ENCODE measurements at regions of chr3 and their contacts with region 1.

Region 1: DNA sequence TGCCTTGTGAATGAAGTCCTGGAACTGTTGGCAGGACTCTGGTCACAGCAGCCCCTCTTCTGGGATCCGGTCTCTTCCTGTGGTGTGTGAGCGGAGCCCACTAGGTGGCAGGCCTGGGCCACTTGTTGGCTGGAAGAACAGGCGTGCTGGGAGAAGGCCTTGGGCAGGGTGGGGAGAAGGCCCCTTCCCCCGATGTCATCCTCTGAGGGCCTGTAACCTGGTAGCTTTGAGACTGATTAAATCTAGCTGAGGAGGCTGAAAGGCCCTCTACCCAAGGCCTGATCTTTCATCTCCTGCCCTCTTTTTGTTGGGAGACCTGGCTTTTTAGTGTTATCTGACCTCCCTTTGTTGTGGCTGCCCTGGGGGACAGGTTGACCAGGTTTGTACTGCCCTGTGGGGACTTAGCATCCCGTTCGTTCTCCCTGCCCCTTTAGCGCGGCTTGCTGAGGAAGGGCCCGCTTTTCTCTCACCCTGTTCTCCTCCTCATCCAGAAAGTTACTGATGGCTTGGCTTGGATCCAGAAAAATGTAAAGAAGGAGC is 48.3 kb downstream of the CHCHD6 start:
- DNase-seq: peak; percentile 90 to 91
- H3K4me3 ChIP-seq: no peak overlapping the region
- H3K4me3 Mint-ChIP-seq: peak overlapping the region; percentile 68
- H3K27ac Mint-ChIP-seq: peak overlapping the region; percentile 92
- H3K4me1 ChIP-seq: peaks cover 72% of the 10 kb centered on the region
- H3K4me1 Mint-ChIP-seq: peaks cover 49% of the 10 kb centered on the region
- H3K27me3 ChIP-seq: no peaks in the 10 kb centered on the region
- H3K27me3 Mint-ChIP-seq: no peaks in the 10 kb centered on the region
- CTCF ChIP-seq: peak; percentile 87 to 95

Region 2: GRCh38 chr3:126540342-126540849 is 212.0 kb before region 1 on chr3:
- CTCF ChIA-PET with region 1: no interaction called
- POLR2A ChIA-PET with region 1: no interaction called
- intact Hi-C with region 1: no loop called
- DNase-seq: peak in 1 of 2 experiments; percentile 8
- H3K4me3 ChIP-seq: no peak overlapping the region
- H3K4me3 Mint-ChIP-seq: no peak overlapping the region
- H3K27ac Mint-ChIP-seq: no peak overlapping the region
- H3K4me1 ChIP-seq: no peaks in the 10 kb centered on the region
- H3K4me1 Mint-ChIP-seq: no peaks in the 10 kb centered on the region
- H3K27me3 ChIP-seq: no peaks in the 10 kb centered on the region
- H3K27me3 Mint-ChIP-seq: no peaks in the 10 kb centered on the region
- CTCF ChIP-seq: no peak

Region 3: GRCh38 chr3:126850370-126851085 is 98.2 kb after region 1 on chr3:
- CTCF ChIA-PET with region 1: interaction called, 14 read pairs
- POLR2A ChIA-PET with region 1: interaction called, 3 read pairs
- intact Hi-C with region 1: loop called (anchors 1 kb)
- DNase-seq: peak; percentile 87 to 93
- H3K4me3 ChIP-seq: no peak overlapping the region
- H3K4me3 Mint-ChIP-seq: peak overlapping the region; percentile 43
- H3K27ac Mint-ChIP-seq: peak overlapping the region; percentile 79
- H3K4me1 ChIP-seq: peaks cover 86% of the 10 kb centered on the region
- H3K4me1 Mint-ChIP-seq: peaks cover 72% of the 10 kb centered on the region
- H3K27me3 ChIP-seq: no peaks in the 10 kb centered on the region
- H3K27me3 Mint-ChIP-seq: no peaks in the 10 kb centered on the region
- CTCF ChIP-seq: no peak

Region 4: GRCh38 chr3:126932188-126932968 is 180.0 kb after region 1 on chr3:
- CTCF ChIA-PET with region 1: interaction called, 9 read pairs
- POLR2A ChIA-PET with region 1: no interaction called
- intact Hi-C with region 1: loop called (anchors 5 kb)
- DNase-seq: no peak
- H3K4me3 ChIP-seq: no peak overlapping the region
- H3K4me3 Mint-ChIP-seq: no peak overlapping the region
- H3K27ac Mint-ChIP-seq: no peak overlapping the region
- H3K4me1 ChIP-seq: peaks cover 35% of the 10 kb centered on the region
- H3K4me1 Mint-ChIP-seq: peaks cover 43% of the 10 kb centered on the region
- H3K27me3 ChIP-seq: no peaks in the 10 kb centered on the region
- H3K27me3 Mint-ChIP-seq: no peaks in the 10 kb centered on the region
- CTCF ChIP-seq: no peak

Region 5: DNA sequence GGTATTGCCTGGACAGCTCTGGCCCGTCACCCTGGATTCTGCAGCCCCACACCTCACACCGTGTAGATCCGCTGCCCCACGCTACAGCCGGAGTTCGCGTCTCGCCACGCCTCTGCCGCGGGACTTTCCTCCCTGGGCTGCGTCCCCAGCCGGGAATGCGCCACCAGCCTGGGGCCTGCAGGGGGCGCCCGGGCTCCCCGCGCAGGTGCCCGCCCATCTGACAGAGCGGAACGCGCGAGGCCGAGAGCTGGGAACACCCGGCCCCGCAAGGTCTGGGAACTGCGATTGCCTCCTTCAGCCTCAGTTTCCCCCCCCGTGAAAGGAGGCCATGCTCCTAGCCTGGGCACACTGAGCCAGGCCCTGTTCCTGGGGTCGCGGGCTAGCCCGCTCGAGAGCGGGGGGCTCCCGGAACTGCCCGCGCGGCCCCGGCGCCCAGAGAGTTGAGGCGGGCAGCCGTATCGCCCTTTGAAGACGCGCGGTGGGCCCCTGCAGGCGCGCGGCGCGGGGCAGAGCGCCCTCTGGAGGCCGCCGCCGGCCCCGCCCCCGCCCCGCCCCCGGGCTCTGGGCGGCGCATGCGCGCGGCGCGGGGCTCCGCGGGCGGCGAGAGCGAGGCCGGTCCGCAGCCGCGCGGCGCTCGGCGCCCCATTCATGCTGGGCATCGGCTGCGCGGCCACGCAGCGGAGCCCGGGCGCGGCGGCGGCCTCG is 230.2 kb after region 1 on chr3 and contains the start of gene PLXNA1:
- CTCF ChIA-PET with region 1: interaction called, 18 read pairs
- POLR2A ChIA-PET with region 1: no interaction called
- intact Hi-C with region 1: loop called (anchors 1 kb)
- DNase-seq: peak; percentile 65 to 86
- H3K4me3 ChIP-seq: peak within 1 kb of the TSS; percentile 88
- H3K4me3 Mint-ChIP-seq: peak within 1 kb of the TSS; percentile 68
- H3K27ac Mint-ChIP-seq: no peak within 1 kb of the TSS
- H3K4me1 ChIP-seq: peaks cover 16% of the 10 kb centered on the region; the same call in 1 of the 2 replicates
- H3K4me1 Mint-ChIP-seq: peaks cover 7% of the 10 kb centered on the region
- H3K27me3 ChIP-seq: no peaks in the 10 kb centered on the region
- H3K27me3 Mint-ChIP-seq: no peaks in the 10 kb centered on the region
- CTCF ChIP-seq: peak; percentile 92 to 93
- total RNA-seq, gene PLXNA1: 92.4 and 95.1 TPM in 2 replicates

Measured in Caco-2 (cell line).